Activated CD4-positive, alpha-beta T cell treated with anti-CD3 and anti-CD28 coated beads, Interleukin-2, amount 10 ng/mL, durations not matched to agents 24 days and 14 days (primary cell): ENCODE measurements at regions of chr2 and their contacts with region 1.

Region 1: GRCh38 chr2:118013724-118014491 is at the start of gene CCDC93:
- DNase-seq: peak; percentile 97
- H3K4me3 Mint-ChIP-seq: peak within 1 kb of the TSS; percentile 96
- H3K27ac Mint-ChIP-seq: peak within 1 kb of the TSS; percentile 91
- H3K4me1 Mint-ChIP-seq: peaks cover 41% of the 10 kb centered on the region
- H3K27me3 Mint-ChIP-seq: no peaks in the 10 kb centered on the region
- total RNA-seq, gene CCDC93: 30.3 and 34.4 TPM in 2 replicates

Region 2: GRCh38 chr2:117814417-117815264 is 199.3 kb before region 1 on chr2 and contains the start of gene DDX18:
- intact Hi-C with region 1: loop called (anchors 1 kb)
- DNase-seq: peak; percentile 99
- H3K4me3 Mint-ChIP-seq: peak within 1 kb of the TSS; percentile 97
- H3K27ac Mint-ChIP-seq: peak within 1 kb of the TSS; percentile 95
- H3K4me1 Mint-ChIP-seq: peaks cover 30% of the 10 kb centered on the region
- H3K27me3 Mint-ChIP-seq: no peaks in the 10 kb centered on the region
- total RNA-seq, gene DDX18: 150 and 157 TPM in 2 replicates